Spleen (tissue), 13 donors: ENCODE measurements at regions of chr3 and their contacts with region 1.

Region 1: DNA sequence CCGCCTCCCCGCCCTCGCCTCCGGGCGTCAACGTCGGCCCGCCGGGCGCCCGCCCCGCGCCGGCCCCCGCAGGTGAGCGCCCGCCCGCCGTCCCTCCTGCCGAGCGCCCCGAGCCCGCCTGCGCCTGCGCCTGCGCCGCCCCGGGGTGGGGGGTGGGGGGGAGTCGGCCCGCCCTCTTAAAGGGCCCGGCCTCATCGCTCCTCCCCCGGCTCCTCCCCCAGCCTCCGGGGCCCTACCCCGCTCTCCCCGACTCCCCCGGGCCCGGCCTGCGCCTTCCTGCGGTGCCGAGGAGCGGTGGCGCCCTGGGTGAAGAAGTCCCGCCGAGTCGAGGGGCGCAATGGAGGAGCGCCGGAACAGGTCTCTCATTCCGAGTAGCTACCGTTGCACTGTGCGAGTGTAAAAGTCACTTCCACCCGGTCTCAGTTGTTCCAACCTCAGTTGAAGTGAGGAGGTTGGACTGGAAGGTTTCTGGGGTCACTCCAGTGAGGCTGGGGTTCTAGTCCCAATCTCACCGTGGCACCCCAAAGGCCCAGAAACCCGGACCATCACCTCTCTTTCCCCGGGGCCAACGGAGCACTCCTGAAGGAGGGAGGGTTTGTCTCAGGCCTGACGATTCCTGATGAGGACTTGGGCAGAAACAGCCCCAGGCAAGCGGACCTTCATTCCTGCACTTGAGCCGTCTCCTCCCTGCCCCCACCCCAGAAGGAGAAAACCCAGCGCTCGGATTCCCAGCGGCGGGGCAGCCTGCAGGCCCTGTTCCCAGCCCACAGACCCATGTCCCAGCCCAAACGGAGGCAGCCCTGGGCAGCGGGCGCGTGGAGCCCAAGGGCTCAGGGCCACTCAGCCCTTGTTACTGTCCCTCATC is 1.5 kb upstream of the TNK2 start:
- DNase-seq: peak; percentile 97
- H3K4me3 ChIP-seq: peak overlapping the region in 7 of 8 donors; percentile 56 to 94 (median 79)
- H3K27ac ChIP-seq: peak overlapping the region in 7 of 8 donors; percentile 59 to 97 (median 91)
- H3K4me1 ChIP-seq: peaks cover 13 to 57% (median 52%) of the 10 kb centered on the region in 6 donors
- H3K27me3 ChIP-seq: no peaks in the 10 kb centered on the region
- CTCF ChIP-seq: peak in 3 of 11 experiments; percentile 16 to 24 (median 18)
- POLR2A ChIP-seq: no peak

Region 2: DNA sequence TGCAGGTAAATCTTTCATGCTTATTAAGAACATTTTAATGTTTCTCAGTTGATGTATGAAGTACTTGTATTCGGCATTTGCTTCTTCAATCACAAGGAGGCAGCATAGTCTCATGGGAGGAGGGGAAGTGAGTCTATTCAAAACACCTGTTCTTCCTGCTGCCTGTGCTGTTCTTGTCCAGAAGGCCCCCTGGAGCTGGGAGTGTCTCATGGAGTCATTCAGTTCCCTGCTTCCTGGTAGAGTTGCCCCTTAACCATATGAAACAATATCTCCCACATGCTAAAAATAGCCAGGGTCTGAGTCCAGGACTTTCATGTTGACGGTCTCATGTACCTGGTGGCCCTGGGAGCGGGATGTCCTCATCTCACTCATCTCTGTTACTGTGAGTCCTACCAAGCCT is 351.3 kb before region 1 on chr3:
- intact Hi-C with region 1: loop called (anchors 10 kb)
- DNase-seq: no peak
- H3K4me3 ChIP-seq: no peak overlapping the region
- H3K27ac ChIP-seq: no peak overlapping the region
- H3K4me1 ChIP-seq: peaks cover 0 to 8% (median 0%) of the 10 kb centered on the region in 6 donors
- H3K27me3 ChIP-seq: no peaks in the 10 kb centered on the region
- CTCF ChIP-seq: peak in 9 of 11 experiments; percentile 5 to 52 (median 36)
- POLR2A ChIP-seq: no peak